ENCODE measurements at regions of chr5 and their contacts with region 1.

Region 1: GRCh38 chr5:96439477-96440184 is 6.6 kb upstream of the PCSK1 start:
- DNase-seq: no peak

Region 2: DNA sequence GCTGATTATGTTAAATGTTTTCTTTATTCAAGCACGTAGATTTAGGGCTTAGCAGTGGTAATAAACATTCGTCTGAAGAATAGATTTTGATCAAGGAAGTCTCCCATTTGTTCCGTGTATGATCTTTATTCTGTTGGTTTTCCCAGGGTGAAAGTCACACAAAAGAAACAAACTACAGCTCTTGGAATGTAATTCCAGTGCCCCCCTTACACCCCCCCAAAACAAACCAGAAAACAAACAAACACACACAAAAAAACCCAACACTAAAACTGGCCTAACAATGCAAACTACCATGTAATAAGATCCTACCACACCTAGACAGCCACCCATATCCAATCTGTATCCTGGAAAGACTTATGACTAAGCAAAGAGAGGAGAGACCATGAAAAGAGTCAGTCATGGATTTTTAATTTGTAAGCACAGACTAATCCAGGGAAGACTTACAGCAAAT is 281.8 kb before region 1 on chr5:
- intact Hi-C with region 1: loop called in 1 of 2 experiments (anchors 5 kb)
- DNase-seq: no peak

Region 3: GRCh38 chr5:96476654-96477053 is 37.0 kb after region 1 on chr5:
- intact Hi-C with region 1: no loop called
- DNase-seq: no peak

Region 4: DNA sequence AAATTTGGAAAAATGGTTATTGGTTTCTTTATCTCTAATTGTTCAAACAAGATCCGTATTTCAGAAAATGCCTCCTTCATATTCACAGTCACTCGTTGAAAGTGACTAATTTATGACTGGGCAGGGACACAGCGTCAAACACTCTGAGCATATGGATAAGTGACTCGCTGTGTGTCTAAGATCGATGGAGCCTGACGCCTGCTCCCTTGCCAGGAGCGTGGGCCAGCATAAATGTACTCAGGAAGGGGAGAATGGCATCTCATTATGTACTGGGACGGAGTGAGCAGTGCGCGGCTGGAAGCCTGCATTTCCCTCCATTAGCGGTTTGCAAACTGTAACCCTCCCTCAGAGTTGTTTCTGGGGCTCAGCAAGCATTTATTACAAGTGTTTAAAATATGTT is 142.7 kb after region 1 on chr5:
- intact Hi-C with region 1: no loop called
- DNase-seq: no peak

Region 5: DNA sequence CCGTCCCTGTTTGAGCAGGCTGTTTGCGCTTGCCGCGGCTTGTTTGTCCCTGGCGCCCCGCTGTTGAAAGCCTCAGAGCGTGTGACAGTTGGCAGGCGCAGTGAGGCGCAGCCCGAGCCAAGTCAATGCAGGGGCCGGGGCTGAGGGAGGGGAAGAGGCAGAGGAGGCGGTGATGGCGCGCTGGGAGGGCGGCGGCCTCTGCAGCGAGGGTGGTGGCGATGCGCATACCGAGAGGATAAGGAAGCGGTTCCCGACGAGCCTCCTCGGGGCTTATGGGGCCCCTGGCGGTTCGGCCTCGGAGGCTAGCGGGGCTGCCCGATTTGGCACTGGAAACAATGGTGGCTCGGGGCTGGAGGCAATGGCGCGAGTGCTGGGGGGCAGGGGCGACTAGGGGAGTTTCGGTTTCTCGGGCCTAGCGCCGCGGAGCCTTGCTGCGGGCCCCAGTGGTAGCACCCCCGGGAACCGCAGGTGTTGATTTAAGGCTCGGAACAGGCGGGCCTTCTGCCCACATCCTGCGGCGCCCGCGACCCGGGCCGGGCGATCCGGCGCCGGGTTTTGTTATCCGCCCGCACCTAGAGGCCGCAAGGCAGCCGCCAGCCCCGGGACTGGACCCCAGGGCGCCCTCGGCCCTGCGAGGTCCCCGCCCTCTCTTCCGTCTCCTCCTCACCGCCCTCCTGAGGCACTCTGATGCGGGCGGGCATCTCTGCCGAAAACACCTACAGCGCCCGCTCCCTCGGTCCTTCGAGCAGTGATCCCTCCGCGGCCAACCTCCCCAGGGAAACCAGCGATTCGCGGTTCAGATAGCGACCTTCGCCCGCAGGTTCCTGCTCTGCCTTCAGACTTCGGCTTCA is 495.3 kb after region 1 on chr5:
- intact Hi-C with region 1: no loop called
- DNase-seq: peak; percentile 96